Activated CD4-positive, alpha-beta memory T cell treated with anti-CD3 and anti-CD28 coated beads for 36 hours (primary cell): ENCODE measurements at regions of chr5 and their contacts with region 1.

Region 1: DNA sequence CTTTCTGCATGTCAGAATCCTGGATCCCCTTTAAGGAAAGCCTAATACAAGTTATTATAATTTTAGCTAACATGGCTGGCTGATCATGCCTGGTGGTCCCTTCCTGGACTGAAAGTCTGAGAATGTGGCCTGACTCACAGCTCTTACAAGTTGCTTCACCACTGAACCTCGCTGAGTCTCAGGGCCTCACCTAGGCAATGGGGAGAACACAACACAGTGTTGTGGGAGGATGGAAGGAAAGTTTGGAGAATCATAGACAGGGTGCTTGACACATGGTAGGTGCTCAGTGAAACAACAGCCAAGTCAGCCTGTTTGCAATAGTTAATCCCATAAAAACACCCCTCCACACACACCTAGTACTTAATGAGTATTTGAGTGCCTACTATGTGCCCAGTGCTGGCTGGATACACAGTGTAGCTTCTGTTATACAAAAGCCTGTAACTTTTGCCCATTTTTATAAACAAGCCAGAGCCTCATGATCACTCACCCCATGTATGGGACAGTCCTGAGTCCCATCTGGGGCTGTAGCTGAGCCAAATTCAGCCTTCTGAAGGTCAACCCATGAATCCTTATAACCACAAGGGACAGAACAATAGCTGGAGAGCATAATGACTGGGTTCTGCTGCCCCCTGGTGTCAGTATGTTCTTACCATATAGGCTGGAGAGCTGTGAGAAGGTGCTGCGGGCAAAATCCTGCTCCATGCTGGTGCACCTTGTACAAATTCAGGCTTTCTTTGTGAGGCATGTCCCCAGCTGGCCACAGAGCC is 3.9 kb downstream of the ACSL6 start:
- DNase-seq: peak; percentile 85
- H3K4me3 Mint-ChIP-seq: no peak overlapping the region
- H3K27ac Mint-ChIP-seq: no peak overlapping the region
- H3K4me1 Mint-ChIP-seq: peaks cover 23% of the 10 kb centered on the region
- H3K27me3 Mint-ChIP-seq: peaks cover 17% of the 10 kb centered on the region

Region 2: GRCh38 chr5:131514316-131515283 is 493.0 kb before region 1 on chr5:
- CTCF ChIA-PET with region 1: no interaction called
- POLR2A ChIA-PET with region 1: no interaction called
- intact Hi-C with region 1: loop called (anchors 5 kb)
- DNase-seq: no peak
- H3K4me3 Mint-ChIP-seq: peak overlapping the region; percentile 60
- H3K27ac Mint-ChIP-seq: peak overlapping the region; percentile 65
- H3K4me1 Mint-ChIP-seq: peaks cover 54% of the 10 kb centered on the region
- H3K27me3 Mint-ChIP-seq: no peaks in the 10 kb centered on the region

Region 3: GRCh38 chr5:131796793-131797693 is 210.5 kb before region 1 on chr5 and contains the start of gene FNIP1:
- CTCF ChIA-PET with region 1: interaction called, 5 read pairs
- POLR2A ChIA-PET with region 1: interaction called, 4 read pairs
- intact Hi-C with region 1: loop called (anchors 5 kb)
- DNase-seq: peak; percentile 99
- H3K4me3 Mint-ChIP-seq: peak within 1 kb of the TSS; percentile 97
- H3K27ac Mint-ChIP-seq: peak within 1 kb of the TSS; percentile 84
- H3K4me1 Mint-ChIP-seq: peaks cover 33% of the 10 kb centered on the region
- H3K27me3 Mint-ChIP-seq: no peaks in the 10 kb centered on the region
- total RNA-seq, gene FNIP1: 14.0 to 15.9 TPM

Region 4: GRCh38 chr5:131996207-131997025 is 11.2 kb before region 1 on chr5:
- CTCF ChIA-PET with region 1: interaction called, 18 read pairs
- POLR2A ChIA-PET with region 1: no interaction called
- intact Hi-C with region 1: no loop called
- DNase-seq: no peak
- H3K4me3 Mint-ChIP-seq: no peak overlapping the region
- H3K27ac Mint-ChIP-seq: no peak overlapping the region
- H3K4me1 Mint-ChIP-seq: peaks cover 42% of the 10 kb centered on the region
- H3K27me3 Mint-ChIP-seq: no peaks in the 10 kb centered on the region

Region 5: GRCh38 chr5:132410451-132411381 is 403.1 kb after region 1 on chr5:
- CTCF ChIA-PET with region 1: no interaction called
- POLR2A ChIA-PET with region 1: no interaction called
- intact Hi-C with region 1: no loop called
- DNase-seq: peak; percentile 90
- H3K4me3 Mint-ChIP-seq: peak overlapping the region; percentile 93
- H3K27ac Mint-ChIP-seq: peak overlapping the region; percentile 96
- H3K4me1 Mint-ChIP-seq: peaks cover 65% of the 10 kb centered on the region
- H3K27me3 Mint-ChIP-seq: no peaks in the 10 kb centered on the region